ENCODE measurements at regions of chr11 and their contacts with region 1.

Region 1: DNA sequence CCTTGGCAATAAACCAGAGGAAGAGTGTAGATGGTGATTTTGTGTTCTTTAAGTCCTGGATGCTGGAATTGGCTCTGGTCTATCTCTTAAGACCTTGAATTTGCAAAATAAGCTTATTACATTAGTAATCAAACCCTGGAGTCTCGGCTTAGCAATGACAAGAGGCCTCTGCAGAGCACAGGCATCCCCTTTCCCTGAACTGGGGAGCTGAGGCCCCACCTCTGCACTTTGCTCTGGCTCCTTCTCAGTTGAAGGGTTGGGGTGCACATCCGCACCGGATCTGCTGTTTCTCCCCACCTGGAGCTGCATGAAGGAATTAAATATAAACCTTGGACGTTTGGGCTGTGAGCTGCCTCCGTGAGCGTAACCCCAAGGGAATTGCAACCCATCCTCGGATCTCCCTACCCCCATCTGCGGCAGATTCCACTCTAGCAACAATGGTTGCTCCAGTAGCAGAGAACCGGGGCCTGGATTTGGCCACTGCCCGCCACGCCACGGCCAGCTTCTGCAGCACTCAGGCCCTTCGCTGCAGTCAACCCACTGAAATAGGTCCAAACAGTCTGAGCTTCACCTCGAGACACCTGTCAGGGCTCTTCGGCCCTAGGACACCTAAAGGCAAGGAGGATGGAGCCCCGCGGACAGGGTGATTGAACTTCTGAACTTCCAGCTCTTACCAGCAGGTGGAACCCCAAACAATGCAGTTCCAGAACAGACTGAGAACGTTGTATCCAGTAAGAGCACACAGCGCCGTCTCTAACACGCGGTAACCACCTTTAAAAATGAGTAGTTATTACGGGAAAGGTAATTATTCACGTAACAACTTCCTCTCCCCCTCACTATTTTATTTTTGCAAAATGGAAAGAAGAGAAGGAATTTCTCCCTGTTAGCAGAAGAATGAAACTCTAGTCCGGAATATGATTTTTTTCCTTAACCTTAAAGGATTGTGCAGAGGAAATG is 54.8 kb upstream of the CAPRIN1 start:
- DNase-seq: peak; percentile 79
- ATAC-seq: peak; percentile 93

Region 2: DNA sequence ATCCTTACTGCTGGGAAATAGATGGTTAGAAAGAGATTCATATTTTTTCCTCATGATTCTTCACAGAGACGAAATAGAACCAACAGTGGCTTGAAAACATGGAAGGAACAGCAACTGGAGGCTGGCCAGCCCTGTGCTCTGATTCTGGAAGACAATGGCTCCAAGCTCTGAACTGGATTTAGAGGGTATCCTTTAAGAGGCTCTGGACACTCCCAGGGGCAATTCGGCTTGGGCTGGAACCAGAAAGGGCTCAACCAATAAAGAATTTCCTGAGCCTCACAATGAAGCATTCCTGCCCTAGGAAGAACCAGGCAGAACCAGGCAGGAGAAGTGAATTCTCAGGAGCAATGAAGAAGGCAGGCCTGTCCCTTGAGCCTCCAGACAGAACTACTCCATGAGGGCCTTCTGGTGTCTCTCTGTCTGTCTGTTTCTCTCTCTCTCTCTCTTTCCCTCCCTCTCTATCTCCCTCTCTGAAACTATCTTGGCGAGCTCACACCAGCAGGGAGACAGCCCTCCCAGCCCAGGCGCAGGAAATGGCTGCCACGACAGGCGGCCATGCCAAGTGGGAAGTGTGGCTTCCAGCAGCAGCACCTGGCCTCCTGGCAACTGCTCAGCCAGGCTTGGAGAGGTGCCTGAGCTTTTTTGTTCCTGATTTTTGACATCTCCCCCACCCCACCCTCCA is 1812.6 kb before region 1 on chr11:
- intact Hi-C with region 1: no loop called
- DNase-seq: no peak
- ATAC-seq: no peak

Region 3: GRCh38 chr11:33027846-33028536 is 968.8 kb before region 1 on chr11:
- intact Hi-C with region 1: no loop called
- DNase-seq: no peak
- ATAC-seq: no peak

Region 4: GRCh38 chr11:33874910-33875490 is 121.8 kb before region 1 on chr11:
- intact Hi-C with region 1: no loop called
- DNase-seq: no peak
- ATAC-seq: no peak

Region 5: GRCh38 chr11:34364102-34364501 is 367.3 kb after region 1 on chr11:
- intact Hi-C with region 1: loop called (anchors 5 kb)
- DNase-seq: no peak
- ATAC-seq: no peak

Region 6: DNA sequence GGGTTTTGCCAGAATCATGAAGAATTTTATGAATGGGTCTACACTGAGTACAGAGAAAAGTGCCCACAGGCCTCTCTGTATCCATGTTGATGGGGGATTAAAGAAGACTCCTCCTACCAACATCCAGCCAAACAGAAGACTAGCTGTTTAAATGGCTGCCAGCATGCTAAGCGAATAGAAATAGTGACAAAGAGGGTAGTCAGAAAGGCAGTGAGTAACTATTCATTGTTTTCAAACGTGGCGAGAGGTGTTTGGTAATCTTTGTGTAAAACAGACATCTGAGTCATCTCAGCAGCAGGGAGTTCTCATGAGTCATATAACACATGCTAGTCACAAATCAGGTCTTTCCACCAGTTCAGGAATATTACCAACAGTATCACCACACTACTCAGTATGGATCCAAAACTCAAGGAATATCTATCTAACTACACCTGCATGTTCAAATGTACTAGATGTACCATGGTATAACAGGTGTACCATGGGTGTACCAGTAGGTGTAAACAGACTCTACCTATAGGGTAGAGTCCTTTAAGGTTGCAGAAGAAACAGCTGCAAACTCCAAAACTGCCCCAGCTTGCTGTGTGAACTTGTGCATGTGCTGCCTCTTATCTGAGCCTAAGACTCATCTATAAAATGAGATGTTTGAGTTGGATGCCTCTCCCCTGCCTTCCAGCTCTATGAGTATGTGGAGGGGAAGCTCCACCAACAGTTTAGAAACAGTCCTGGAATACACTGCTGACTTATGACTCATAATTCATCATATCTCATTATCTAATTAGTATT is 1340.6 kb after region 1 on chr11:
- intact Hi-C with region 1: loop called (anchors 5 kb)
- DNase-seq: no peak
- ATAC-seq: no peak